ENCODE measurements at regions of chr9 and their contacts with region 1.

Region 1: DNA sequence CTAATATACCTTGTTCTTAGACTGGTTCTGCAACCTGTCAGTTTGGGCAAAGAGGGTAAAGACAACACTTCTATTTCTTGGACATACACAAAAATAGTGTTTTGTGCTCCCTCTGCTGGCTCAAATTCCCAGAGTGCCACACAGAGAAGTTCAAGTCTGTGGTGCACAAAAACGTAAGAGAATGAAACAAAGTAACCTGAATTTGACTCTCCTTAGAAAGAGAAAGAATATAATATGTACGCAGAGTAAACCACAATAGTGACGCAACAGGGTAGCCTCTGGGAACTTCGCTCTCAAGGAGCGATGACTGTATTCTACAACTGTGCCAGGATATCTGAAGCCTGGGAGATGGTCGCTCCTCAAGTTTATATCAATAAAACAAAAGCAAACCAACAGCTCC is 18.5 kb downstream of the DDX31 start:
- DNase-seq: peak in 1 of 35 experiments; percentile 20
- ATAC-seq: no peak
- H3K4me3 ChIP-seq: no peak overlapping the region
- H3K4me3 Mint-ChIP-seq: no peak overlapping the region
- H3K27ac ChIP-seq: no peak overlapping the region
- H3K27ac Mint-ChIP-seq: no peak overlapping the region
- H3K4me1 ChIP-seq: no peaks in the 10 kb centered on the region
- H3K4me1 Mint-ChIP-seq: peaks cover 6 to 8% (median 6%) of the 10 kb centered on the region in 3 donors
- H3K27me3 ChIP-seq: no peaks in the 10 kb centered on the region
- H3K27me3 Mint-ChIP-seq: no peaks in the 10 kb centered on the region

Region 2: DNA sequence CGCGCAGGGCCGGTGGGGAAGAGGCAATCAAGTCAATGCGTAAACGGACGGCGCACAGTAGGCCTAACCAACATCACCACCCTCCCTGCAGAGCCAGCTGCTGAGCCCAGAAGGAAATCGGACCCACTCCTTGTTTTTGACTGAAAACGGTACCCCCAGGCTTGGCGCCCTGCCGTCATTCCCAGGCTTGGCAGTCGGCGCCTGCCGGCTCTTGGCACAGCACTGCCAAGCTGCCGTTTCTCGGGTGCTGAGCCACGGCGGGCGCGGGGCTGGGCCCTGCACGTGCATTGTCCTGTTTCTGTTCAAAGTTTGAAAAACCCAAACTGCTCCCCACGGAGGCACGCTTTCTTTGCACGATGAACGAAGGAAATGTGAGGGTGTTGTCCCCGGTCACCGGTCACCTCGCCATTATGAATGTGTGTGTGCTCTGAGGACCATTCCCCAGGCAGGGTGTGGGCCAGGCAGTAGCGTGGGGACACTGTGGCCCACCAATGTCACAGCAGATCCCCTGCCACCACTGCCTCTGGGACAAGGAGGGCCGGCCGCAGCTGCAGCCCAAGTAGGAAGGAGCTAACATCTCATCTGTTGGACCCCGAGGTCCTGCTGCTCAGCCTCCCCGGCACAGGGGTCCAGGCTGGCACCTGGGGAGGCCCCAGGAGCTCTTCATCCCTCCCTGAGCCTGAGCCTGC is 1732.2 kb before region 1 on chr9:
- CTCF ChIA-PET with region 1: no interaction called
- POLR2A ChIA-PET with region 1: interaction called in 1 of 2 experiments, 16 read pairs
- DNase-seq: no peak
- ATAC-seq: no peak
- H3K4me3 ChIP-seq: no peak overlapping the region
- H3K4me3 Mint-ChIP-seq: no peak overlapping the region
- H3K27ac ChIP-seq: no peak overlapping the region
- H3K27ac Mint-ChIP-seq: no peak overlapping the region
- H3K4me1 ChIP-seq: no peaks in the 10 kb centered on the region
- H3K4me1 Mint-ChIP-seq: no peaks in the 10 kb centered on the region
- H3K27me3 ChIP-seq: peaks cover 0 to 63% of the 10 kb centered on the region in 2 experiments
- H3K27me3 Mint-ChIP-seq: peaks cover 4 to 8% of the 10 kb centered on the region in 2 donors

Region 3: GRCh38 chr9:132509928-132510874 is 141.1 kb before region 1 on chr9:
- CTCF ChIA-PET with region 1: interaction called in 1 of 2 experiments, 12 read pairs
- POLR2A ChIA-PET with region 1: no interaction called
- DNase-seq: no peak
- ATAC-seq: no peak
- H3K4me3 ChIP-seq: no peak overlapping the region
- H3K4me3 Mint-ChIP-seq: no peak overlapping the region
- H3K27ac ChIP-seq: no peak overlapping the region
- H3K27ac Mint-ChIP-seq: no peak overlapping the region
- H3K4me1 ChIP-seq: peaks cover 0 to 21% of the 10 kb centered on the region in 2 experiments
- H3K4me1 Mint-ChIP-seq: peaks cover 9 to 18% (median 15%) of the 10 kb centered on the region in 3 donors
- H3K27me3 ChIP-seq: peaks cover 2 to 39% of the 10 kb centered on the region in 2 experiments
- H3K27me3 Mint-ChIP-seq: peaks cover 18 to 20% of the 10 kb centered on the region in 2 donors

Region 4: GRCh38 chr9:132752877-132753592 is 101.8 kb after region 1 on chr9:
- CTCF ChIA-PET with region 1: no interaction called
- POLR2A ChIA-PET with region 1: no interaction called
- DNase-seq: peak in 1 of 35 experiments; percentile 17
- ATAC-seq: no peak
- H3K4me3 ChIP-seq: no peak overlapping the region
- H3K4me3 Mint-ChIP-seq: no peak overlapping the region
- H3K27ac ChIP-seq: no peak overlapping the region
- H3K27ac Mint-ChIP-seq: no peak overlapping the region
- H3K4me1 ChIP-seq: no peaks in the 10 kb centered on the region
- H3K4me1 Mint-ChIP-seq: no peaks in the 10 kb centered on the region
- H3K27me3 ChIP-seq: peaks cover 0 to 12% of the 10 kb centered on the region in 2 experiments
- H3K27me3 Mint-ChIP-seq: peaks cover 3 to 6% of the 10 kb centered on the region in 2 donors

Region 5: GRCh38 chr9:132780230-132781007 is 129.2 kb after region 1 on chr9:
- CTCF ChIA-PET with region 1: no interaction called
- POLR2A ChIA-PET with region 1: no interaction called
- DNase-seq: no peak
- ATAC-seq: no peak
- H3K4me3 ChIP-seq: no peak overlapping the region
- H3K4me3 Mint-ChIP-seq: peak overlapping the region in 1 of 3 donors; percentile 20
- H3K27ac ChIP-seq: no peak overlapping the region
- H3K27ac Mint-ChIP-seq: no peak overlapping the region
- H3K4me1 ChIP-seq: no peaks in the 10 kb centered on the region
- H3K4me1 Mint-ChIP-seq: peaks cover 2 to 11% (median 8%) of the 10 kb centered on the region in 3 donors
- H3K27me3 ChIP-seq: peaks cover 0 to 29% of the 10 kb centered on the region in 2 experiments
- H3K27me3 Mint-ChIP-seq: peaks cover 32 to 58% of the 10 kb centered on the region in 2 donors

Region 6: DNA sequence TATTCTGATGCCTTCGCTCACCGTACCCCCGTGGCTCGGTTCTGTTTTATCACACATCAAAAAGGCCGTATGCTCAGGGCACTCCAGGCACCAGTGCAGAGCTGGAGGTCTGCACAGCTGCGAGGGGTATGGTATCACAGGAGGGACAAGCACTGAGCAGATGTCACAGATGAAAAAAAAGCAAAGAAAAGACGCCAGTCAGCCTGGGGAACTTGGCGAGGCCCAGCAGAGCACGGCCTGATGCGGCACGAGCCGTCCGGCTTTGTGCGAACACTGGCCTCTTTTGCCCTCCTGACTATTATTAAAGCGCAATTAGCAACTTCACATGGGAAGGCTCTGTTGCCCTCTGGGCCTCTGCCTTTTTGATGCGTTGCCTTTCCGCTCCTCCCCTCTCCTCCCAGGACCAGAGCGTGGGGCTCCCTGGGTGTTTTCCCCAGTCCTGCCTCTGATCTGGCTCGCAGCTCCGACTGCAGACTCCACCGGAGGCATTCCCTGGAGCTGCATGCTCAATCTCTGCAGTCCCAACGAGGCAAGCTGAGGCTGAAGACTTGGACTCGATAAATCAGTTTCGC is 182.4 kb after region 1 on chr9:
- CTCF ChIA-PET with region 1: no interaction called
- POLR2A ChIA-PET with region 1: no interaction called
- DNase-seq: no peak
- ATAC-seq: no peak
- H3K4me3 ChIP-seq: no peak overlapping the region
- H3K4me3 Mint-ChIP-seq: no peak overlapping the region
- H3K27ac ChIP-seq: no peak overlapping the region
- H3K27ac Mint-ChIP-seq: no peak overlapping the region
- H3K4me1 ChIP-seq: no peaks in the 10 kb centered on the region
- H3K4me1 Mint-ChIP-seq: no peaks in the 10 kb centered on the region
- H3K27me3 ChIP-seq: peaks cover 0 to 16% of the 10 kb centered on the region in 2 experiments
- H3K27me3 Mint-ChIP-seq: peaks cover 3 to 13% of the 10 kb centered on the region in 2 donors

Measured in T-cell (primary cell).